IMR-90 (cell line): ENCODE measurements at regions of chr6 and their contacts with region 1.

Region 1: DNA sequence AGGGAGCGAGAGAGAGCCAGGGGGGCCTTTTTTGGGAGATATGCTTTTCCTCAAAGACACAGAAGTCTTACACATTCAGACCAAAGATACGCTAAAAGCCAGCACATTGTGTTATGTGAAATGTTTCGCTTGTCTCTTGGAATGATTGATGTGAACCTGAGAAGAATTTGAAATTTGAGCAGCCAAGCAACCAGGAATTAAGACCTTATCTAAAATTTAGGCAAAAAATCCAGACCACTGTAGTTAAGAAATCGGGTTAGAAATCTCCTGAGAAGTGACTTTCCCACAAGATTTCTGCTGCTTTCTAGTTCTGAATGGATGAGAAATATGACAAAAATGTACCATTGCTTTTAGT is 223.2 kb upstream of the GMDS start:
- DNase-seq: no peak
- ATAC-seq: no peak
- H3K4me3 ChIP-seq: no peak overlapping the region
- H3K27ac ChIP-seq: no peak overlapping the region
- H3K4me1 ChIP-seq: no peaks in the 10 kb centered on the region
- H3K27me3 ChIP-seq: peaks cover 35% of the 10 kb centered on the region
- CTCF ChIP-seq: no peak
- POLR2A ChIP-seq: no peak
- RAD21 ChIP-seq: no peak

Region 2: GRCh38 chr6:2622671-2623070 is 154.1 kb after region 1 on chr6:
- CTCF ChIA-PET with region 1: no interaction called
- POLR2A ChIA-PET with region 1: no interaction called
- dilution Hi-C with region 1: no loop called
- in situ Hi-C with region 1: no loop called
- intact Hi-C with region 1: loop called (anchors 5 kb)
- DNase-seq: no peak
- ATAC-seq: no peak
- H3K4me3 ChIP-seq: no peak overlapping the region
- H3K27ac ChIP-seq: no peak overlapping the region
- H3K4me1 ChIP-seq: peaks cover 5% of the 10 kb centered on the region; the same call in 1 of the 2 replicates
- H3K27me3 ChIP-seq: peaks cover 16% of the 10 kb centered on the region
- CTCF ChIP-seq: no peak
- POLR2A ChIP-seq: no peak
- RAD21 ChIP-seq: no peak